Activated T-helper 1 cell treated with anti-CD3 and anti-CD28 coated beads, Interleukin-12 subunit alpha, Interleukin-12 subunit beta, Interleukin-2, Interleukin-4 antibody, amounts not matched to agents 30 ng/mL and 10 ng/mL and 1 ng/mL, durations not matched to agents 14 hours and 24 hours and 36 hours (primary cell): ENCODE measurements at regions of chr19 and their contacts with region 1.

Region 1: GRCh38 chr19:17235618-17236377 is 9.8 kb downstream of the OCEL1 start:
- DNase-seq: peak; percentile 75
- H3K4me3 Mint-ChIP-seq: peak overlapping the region; percentile 85
- H3K27ac Mint-ChIP-seq: peak overlapping the region; percentile 79
- H3K4me1 Mint-ChIP-seq: peaks cover 13% of the 10 kb centered on the region
- H3K27me3 Mint-ChIP-seq: no peaks in the 10 kb centered on the region

Region 2: DNA sequence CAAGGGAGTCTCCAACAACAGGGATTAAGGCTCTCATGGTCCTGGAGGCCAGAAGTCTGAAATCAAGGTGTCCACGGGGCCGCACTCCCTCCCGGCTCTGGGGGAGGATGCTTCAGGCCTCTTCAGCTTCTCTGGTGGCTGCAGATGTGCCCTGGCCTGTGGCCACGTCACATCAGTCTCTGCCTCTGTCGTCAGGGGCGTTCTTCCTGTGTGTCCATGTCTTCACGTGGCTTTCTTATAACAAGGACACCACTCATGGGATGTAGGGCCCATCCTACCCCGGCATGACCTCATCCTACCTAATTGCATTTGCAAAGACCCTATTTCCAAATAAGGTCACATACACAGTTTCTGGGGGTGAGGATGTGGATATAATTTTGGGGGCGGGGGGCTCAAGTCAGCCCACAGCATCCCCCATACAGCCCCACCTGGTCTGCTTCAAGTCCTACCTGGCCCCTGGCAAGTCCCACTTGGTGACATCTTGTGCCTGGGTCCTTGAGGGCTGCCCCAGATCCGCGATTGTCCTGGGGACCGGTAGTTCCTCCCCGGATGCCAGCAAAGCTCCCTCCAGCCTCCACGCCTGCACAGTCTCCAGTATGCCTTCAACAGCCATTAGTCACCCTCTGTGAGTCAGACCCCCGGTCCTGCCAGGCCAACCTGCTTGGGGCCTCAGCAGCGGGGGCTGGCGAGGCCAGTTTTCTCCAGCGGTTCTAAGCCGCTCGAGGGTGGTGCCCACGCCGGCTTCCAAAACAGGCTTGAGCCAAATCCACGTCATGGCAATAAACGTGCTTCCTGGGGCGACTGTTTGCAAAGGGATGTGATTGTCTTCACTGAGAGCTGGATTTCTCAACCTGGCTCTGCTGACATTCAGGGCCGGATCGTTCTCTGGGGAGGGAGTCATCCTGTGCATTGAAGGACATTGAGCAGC is 128.0 kb before region 1 on chr19:
- intact Hi-C with region 1: no loop called
- DNase-seq: no peak
- H3K4me3 Mint-ChIP-seq: no peak overlapping the region
- H3K27ac Mint-ChIP-seq: no peak overlapping the region
- H3K4me1 Mint-ChIP-seq: peaks cover 25% of the 10 kb centered on the region
- H3K27me3 Mint-ChIP-seq: no peaks in the 10 kb centered on the region

Region 3: GRCh38 chr19:17205237-17206140 is 30.3 kb before region 1 on chr19:
- intact Hi-C with region 1: loop called (anchors 2 kb)
- DNase-seq: peak; percentile 44
- H3K4me3 Mint-ChIP-seq: no peak overlapping the region
- H3K27ac Mint-ChIP-seq: no peak overlapping the region
- H3K4me1 Mint-ChIP-seq: peaks cover 8% of the 10 kb centered on the region
- H3K27me3 Mint-ChIP-seq: no peaks in the 10 kb centered on the region

Region 4: DNA sequence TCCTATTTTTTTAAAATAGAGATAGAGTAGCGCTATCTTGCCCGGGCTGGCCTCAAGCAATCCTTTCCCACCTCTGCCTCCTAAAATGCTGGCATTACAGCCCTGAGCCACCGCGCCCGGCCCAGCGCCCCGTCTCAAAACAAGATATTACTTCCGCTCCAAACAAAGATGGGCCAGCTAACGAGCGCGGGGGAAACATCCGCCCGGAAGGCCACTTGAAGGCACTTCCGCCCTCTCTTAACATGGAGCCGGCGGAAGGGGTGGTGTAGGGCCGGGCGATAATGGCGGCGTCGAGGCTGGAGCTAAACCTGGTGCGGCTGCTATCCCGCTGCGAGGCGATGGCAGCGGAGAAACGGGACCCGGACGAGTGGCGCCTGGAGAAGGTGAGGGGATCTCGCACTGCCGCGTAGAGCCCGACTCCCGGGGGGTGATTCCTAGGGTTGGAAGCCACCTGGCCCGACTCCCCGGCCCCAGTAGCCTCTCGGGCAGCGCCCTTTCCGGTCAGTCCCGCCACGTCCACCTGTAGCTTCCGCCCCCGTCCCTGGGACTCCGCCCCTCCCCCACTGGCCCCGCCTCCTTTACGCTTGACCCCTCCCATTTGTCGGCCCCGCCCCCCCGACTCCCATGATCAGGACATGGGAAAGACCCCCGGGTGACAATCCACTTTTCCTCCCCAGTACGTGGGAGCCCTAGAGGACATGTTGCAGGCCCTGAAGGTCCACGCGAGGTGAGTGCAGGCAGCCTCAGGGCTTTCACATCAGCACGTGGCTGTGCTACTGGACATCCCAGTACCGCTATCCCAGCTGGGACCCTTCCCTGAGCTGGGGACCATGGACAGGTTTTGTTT is 20.4 kb before region 1 on chr19 and contains the start of gene USE1:
- intact Hi-C with region 1: loop called (anchors 1 kb)
- DNase-seq: peak; percentile 82
- H3K4me3 Mint-ChIP-seq: peak within 1 kb of the TSS; percentile 91
- H3K27ac Mint-ChIP-seq: peak within 1 kb of the TSS; percentile 99
- H3K4me1 Mint-ChIP-seq: peaks cover 11% of the 10 kb centered on the region
- H3K27me3 Mint-ChIP-seq: no peaks in the 10 kb centered on the region
- total RNA-seq, gene USE1: 34.6 and 36.0 TPM in 2 replicates

Region 5: GRCh38 chr19:17305517-17306284 is 69.9 kb after region 1 on chr19 and contains the start of gene MRPL34:
- intact Hi-C with region 1: no loop called
- DNase-seq: peak; percentile 94
- H3K4me3 Mint-ChIP-seq: peak within 1 kb of the TSS; percentile 90
- H3K27ac Mint-ChIP-seq: peak within 1 kb of the TSS; percentile 91
- H3K4me1 Mint-ChIP-seq: peaks cover 45% of the 10 kb centered on the region
- H3K27me3 Mint-ChIP-seq: no peaks in the 10 kb centered on the region
- total RNA-seq, gene MRPL34: 108 and 118 TPM in 2 replicates

Region 6: DNA sequence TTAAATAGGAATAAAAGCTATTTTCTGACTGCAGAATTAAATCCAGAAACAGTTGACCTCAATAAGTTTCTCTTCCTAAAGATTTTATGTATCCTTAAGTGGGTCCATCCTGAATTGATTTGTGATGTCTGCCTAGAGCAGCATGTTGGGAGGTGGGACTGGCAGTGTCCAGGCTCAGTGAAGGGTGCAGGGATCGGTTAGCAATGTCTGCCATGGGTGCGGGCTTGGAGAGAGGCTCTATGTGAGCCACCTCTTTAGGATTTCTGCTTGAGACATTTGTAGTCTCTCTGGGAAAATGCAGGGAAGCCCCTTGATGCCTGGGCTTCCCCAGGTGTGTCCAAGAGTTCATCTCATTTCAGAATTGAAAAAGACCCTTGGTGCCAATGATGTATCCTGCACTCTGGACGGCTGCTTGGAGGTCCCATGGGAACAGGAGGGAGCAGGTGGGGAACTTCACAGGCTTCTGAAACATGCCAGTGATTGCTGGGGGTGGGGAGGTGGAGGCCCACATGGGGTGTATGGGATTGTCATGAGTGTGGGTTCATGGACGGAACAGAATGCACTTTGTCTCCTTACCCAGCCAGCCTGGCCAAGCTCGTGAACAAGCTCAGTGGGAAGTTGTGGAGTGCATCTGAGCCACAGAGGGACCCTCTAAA is 313.4 kb after region 1 on chr19:
- intact Hi-C with region 1: no loop called
- DNase-seq: no peak
- H3K4me3 Mint-ChIP-seq: no peak overlapping the region
- H3K27ac Mint-ChIP-seq: no peak overlapping the region
- H3K4me1 Mint-ChIP-seq: no peaks in the 10 kb centered on the region
- H3K27me3 Mint-ChIP-seq: peaks cover 6% of the 10 kb centered on the region